OCI-LY7 (cell line): ENCODE measurements at regions of chr17 and their contacts with region 1.

Region 1: DNA sequence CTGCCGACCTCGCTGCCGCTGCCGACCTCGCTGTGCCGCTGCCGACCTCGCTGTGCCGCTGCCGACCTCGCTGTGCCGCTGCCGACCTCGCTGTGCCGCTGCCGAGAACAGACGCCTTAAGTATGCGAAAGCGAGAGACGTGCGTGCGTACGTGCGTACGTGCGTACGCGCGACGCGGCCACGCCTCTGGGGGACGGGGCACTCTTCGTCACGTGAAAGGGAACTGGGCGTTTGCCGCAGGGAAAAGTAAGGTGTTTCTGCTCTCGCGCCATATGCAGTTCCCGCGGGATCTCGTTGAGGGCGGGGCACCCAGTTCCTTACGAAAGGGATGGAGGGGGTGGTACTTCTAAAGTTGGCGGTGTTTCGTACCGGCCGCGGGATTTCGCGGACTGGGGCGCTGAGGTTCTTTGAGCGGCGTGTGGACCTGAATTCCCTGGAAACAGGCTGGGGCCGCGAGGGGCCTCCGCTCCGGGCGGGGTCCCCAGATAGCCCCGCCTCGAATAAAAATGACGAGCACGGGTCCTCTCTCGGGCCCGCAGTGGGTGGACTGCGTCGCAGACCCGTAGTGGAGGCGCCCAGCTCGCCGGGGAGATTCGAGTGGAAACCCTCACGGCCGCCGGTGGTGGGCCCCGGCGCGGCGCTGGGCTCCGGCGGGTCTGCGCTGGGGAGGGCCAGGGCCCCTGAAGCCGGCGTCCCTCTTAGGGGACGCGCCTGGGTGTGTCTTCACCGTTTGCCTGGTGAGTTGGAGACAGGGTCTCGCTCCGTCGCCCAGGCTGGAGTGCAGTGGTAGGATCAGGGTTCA is at the start of gene EIF4A3:
- DNase-seq: peak; percentile 100
- H3K4me3 ChIP-seq: peak within 1 kb of the TSS; percentile 93
- H3K27ac ChIP-seq: peak within 1 kb of the TSS; percentile 67
- H3K4me1 ChIP-seq: peaks cover 37% of the 10 kb centered on the region
- CTCF ChIP-seq: no peak
- total RNA-seq, gene EIF4A3: 312 and 313 TPM in 2 replicates

Region 2: GRCh38 chr17:79664921-79665737 is 482.1 kb before region 1 on chr17:
- CTCF ChIA-PET with region 1: no interaction called
- POLR2A ChIA-PET with region 1: no interaction called
- intact Hi-C with region 1: no loop called
- DNase-seq: no peak
- H3K4me3 ChIP-seq: no peak overlapping the region
- H3K27ac ChIP-seq: no peak overlapping the region
- H3K4me1 ChIP-seq: no peaks in the 10 kb centered on the region
- CTCF ChIP-seq: no peak

Region 3: GRCh38 chr17:80263253-80264204 is 116.3 kb after region 1 on chr17:
- CTCF ChIA-PET with region 1: no interaction called
- POLR2A ChIA-PET with region 1: interaction called, 3 read pairs
- intact Hi-C with region 1: loop called (anchors 2 kb)
- DNase-seq: peak; percentile 97
- H3K4me3 ChIP-seq: peak overlapping the region; percentile 53
- H3K27ac ChIP-seq: peak overlapping the region; percentile 81
- H3K4me1 ChIP-seq: peaks cover 50% of the 10 kb centered on the region
- CTCF ChIP-seq: peak; percentile 45; the same call in 1 of the 2 replicates

Region 4: DNA sequence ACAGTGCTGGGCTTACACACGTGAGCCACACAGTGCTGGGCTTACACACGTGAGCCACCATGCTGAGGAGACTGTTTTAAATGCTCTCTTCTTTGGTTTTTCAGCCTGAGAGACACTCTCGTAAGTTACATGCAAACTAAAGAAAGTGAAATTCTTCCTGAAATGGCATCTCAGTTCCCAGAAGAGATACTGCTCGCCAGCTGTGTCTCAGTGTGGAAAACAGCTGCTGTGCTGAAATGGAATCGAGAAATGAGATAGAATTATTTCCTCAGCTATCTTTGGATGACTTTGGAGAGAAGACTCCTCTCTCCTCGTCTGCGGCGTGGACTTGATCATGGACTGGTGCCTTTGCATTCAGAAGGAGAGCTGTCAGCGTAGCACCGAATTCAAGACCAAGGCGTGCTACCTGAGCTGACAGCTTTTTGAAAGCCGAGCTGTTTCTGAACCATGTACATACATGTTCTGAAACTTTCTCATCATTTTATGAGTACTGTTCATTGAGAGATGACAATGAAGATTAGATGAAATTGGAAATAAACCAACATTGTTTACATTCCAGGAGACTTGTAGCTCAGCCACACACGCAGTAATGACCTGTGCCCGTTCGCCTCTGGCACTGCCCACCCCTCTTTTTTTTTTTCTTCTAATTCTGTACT is 246.1 kb after region 1 on chr17:
- CTCF ChIA-PET with region 1: interaction called, 24 read pairs
- POLR2A ChIA-PET with region 1: no interaction called
- intact Hi-C with region 1: no loop called
- DNase-seq: no peak
- H3K4me3 ChIP-seq: no peak overlapping the region
- H3K27ac ChIP-seq: no peak overlapping the region
- H3K4me1 ChIP-seq: no peaks in the 10 kb centered on the region
- CTCF ChIP-seq: no peak

Region 5: DNA sequence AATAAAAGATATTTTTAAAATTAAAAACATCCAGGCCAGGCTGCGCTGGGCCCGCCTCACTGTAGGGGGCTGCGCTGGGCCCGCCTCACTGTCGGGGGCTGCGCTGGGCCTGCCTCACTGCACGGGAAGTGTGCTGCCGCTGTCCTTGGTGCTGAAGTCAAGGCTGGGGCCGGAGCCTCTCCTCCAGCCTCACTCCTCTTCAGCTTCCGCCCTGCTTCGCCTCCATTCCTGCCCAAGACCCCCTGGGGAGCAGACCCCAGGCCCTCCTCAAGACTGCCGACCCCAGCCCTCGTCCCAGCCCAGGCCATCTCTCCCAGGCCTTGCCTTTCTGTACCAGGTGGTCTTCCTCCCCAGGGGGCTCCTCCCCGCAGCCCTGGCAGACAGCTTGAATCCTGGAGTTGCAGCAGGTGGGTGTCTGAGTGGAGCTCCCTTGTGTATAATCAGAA is 293.9 kb after region 1 on chr17:
- CTCF ChIA-PET with region 1: no interaction called
- POLR2A ChIA-PET with region 1: no interaction called
- intact Hi-C with region 1: no loop called
- DNase-seq: peak; percentile 65
- H3K4me3 ChIP-seq: no peak overlapping the region
- H3K27ac ChIP-seq: no peak overlapping the region
- H3K4me1 ChIP-seq: no peaks in the 10 kb centered on the region
- CTCF ChIP-seq: no peak